MCF 10A (cell line): ENCODE measurements at regions of chr4 and their contacts with region 1.

Region 1: DNA sequence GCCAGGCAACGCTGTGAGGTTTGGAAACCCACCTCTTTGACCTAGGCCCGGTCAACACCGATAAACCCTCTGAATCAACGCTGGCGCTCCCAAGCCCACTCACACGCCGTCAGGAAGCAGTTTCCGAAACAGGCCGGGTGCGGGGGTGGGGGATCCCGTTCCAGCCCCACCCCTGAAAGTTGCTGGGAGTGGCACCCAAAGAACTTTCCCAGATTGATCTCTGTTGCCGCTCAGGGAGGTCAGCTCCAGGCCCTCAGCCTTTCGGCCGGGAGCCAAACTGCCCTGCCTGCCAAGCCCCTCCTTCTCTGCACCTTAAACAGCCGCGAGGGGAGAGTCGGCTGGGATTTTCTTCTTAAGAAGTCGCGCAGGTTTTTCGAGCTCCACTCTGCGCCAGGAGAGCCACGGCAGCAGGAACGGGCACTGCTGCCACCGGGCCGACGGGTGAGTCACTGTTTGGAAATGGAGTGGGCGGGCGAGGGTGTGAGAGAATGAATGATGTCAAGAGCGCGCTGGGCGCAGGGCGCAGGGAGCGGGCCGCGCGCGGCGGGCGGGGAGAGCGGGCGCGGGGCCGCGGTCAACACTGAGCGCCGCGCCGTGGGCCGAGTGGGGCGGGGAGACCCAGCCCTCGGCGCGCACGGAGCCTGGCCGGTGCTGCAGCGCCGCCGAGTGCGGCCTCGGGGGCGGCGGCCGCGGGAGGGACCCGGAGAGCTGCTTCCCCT is at the start of gene SGMS2:
- DNase-seq: peak; percentile 96
- H3K4me3 Mint-ChIP-seq: peak within 1 kb of the TSS; percentile 94
- H3K27ac Mint-ChIP-seq: peak within 1 kb of the TSS; percentile 100
- H3K4me1 Mint-ChIP-seq: peaks cover 30% of the 10 kb centered on the region
- H3K27me3 Mint-ChIP-seq: no peaks in the 10 kb centered on the region
- CTCF ChIP-seq: no peak
- total RNA-seq, gene SGMS2: 77.8 and 85.3 TPM in 2 replicates

Region 2: GRCh38 chr4:107747748-107748486 is 76.6 kb before region 1 on chr4:
- CTCF ChIA-PET with region 1: no interaction called
- POLR2A ChIA-PET with region 1: no interaction called
- intact Hi-C with region 1: no loop called
- DNase-seq: no peak
- H3K4me3 Mint-ChIP-seq: no peak overlapping the region
- H3K27ac Mint-ChIP-seq: no peak overlapping the region
- H3K4me1 Mint-ChIP-seq: no peaks in the 10 kb centered on the region
- H3K27me3 Mint-ChIP-seq: peaks cover 34% of the 10 kb centered on the region
- CTCF ChIP-seq: no peak

Region 3: GRCh38 chr4:107757864-107758476 is 66.5 kb before region 1 on chr4:
- CTCF ChIA-PET with region 1: interaction called, 26 read pairs
- POLR2A ChIA-PET with region 1: interaction called, 40 read pairs
- intact Hi-C with region 1: loop called (anchors 2 kb)
- DNase-seq: peak; percentile 36
- H3K4me3 Mint-ChIP-seq: no peak overlapping the region
- H3K27ac Mint-ChIP-seq: no peak overlapping the region
- H3K4me1 Mint-ChIP-seq: no peaks in the 10 kb centered on the region
- H3K27me3 Mint-ChIP-seq: no peaks in the 10 kb centered on the region
- CTCF ChIP-seq: peak; percentile 41

Region 4: DNA sequence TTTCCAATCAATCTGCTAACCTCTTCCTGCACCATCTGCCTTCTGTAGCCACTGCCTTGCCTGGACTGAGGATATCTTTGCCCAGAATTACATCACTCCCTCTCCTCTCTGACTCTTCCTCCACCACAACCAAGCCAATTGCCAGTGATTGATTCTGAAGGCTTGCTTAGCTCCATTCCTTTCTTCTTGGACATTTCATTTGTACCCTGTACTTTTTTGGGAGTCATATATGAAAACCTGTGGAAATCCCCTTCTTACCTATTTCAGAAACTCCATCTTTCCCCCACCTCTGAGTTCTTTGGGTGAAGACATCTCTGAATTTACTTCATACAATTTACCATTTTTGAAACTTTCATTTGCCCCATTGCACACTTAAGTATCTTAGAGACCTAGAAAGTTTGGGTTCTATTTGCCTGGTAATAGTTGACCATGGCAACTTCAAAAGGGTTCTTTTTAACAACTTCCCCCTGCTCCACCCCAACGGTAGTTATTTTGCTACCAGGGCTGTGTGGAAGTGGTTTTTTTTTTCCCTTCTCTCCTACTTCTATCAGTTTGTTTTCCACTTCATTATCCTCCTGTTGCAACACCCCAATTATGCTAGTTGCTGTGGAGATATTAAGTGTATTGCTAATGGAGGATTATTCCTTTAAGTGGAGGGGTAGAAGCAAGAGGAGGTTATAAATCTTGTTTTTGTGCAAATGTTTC is 14.5 kb after region 1 on chr4:
- CTCF ChIA-PET with region 1: interaction called, 4 read pairs
- POLR2A ChIA-PET with region 1: interaction called, 39 read pairs
- intact Hi-C with region 1: no loop called
- DNase-seq: peak; percentile 48
- H3K4me3 Mint-ChIP-seq: no peak overlapping the region
- H3K27ac Mint-ChIP-seq: no peak overlapping the region
- H3K4me1 Mint-ChIP-seq: peaks cover 20% of the 10 kb centered on the region
- H3K27me3 Mint-ChIP-seq: no peaks in the 10 kb centered on the region
- CTCF ChIP-seq: no peak

Region 5: DNA sequence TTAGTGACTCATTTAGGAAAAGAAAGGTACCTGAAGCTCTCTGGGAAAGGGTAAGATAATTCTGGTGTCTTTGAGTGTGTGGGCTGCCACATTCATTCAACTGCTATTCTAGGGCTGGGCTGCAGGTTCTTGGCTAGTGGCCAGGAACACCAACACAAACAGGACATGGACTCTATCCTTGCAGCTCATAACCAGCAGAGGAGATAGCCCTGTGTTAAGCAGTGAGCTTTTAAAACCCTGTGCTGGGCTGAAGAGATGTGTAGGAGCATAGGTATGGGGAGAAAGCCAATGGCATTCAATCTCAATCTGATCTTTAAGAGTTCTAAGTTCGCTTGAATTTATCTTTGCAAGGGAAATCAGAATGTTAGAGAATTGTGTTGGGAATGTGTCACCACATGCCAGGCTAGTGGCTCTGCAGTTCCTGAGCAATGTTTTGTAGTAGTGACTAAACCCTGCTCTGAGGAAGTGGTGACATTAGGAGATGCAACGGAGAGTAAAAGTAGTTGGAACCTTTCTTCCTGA is 39.4 kb after region 1 on chr4:
- CTCF ChIA-PET with region 1: interaction called, 5 read pairs
- POLR2A ChIA-PET with region 1: interaction called, 248 read pairs
- intact Hi-C with region 1: loop called (anchors 1 kb)
- DNase-seq: peak; percentile 84
- H3K4me3 Mint-ChIP-seq: no peak overlapping the region
- H3K27ac Mint-ChIP-seq: peak overlapping the region; percentile 98
- H3K4me1 Mint-ChIP-seq: peaks cover 26% of the 10 kb centered on the region
- H3K27me3 Mint-ChIP-seq: no peaks in the 10 kb centered on the region
- CTCF ChIP-seq: no peak

Region 6: DNA sequence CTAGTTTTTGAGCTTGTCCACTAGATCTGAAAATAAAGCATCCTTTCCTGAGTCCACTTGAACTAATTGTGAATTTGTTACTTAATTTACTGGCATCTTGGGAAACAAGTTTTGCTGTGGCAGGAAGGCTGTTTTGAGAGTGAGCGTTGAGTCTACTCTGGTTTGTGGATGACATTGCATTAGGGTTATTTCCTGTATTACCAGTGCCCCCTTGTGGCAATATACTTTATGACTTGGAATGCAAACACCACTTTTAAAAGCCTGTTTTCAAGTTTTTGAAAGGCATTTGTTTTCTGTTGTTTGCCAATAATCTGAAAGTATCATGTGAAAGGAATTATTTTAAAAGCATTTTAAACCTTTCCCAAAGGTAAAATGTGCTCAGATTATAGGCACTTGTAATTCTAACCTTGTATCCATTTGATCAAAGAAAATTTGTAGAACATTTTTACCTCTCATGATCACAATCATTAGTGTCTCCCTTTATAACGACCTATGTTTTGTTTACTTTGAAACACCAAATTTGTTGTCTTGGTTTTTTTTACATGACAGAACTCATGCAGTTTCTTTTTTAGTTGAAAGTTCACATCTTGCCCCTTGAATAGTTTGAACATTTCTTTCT is 88.9 kb after region 1 on chr4:
- CTCF ChIA-PET with region 1: interaction called, 14 read pairs
- POLR2A ChIA-PET with region 1: interaction called, 39 read pairs
- intact Hi-C with region 1: loop called (anchors 1 kb)
- DNase-seq: peak; percentile 79
- H3K4me3 Mint-ChIP-seq: no peak overlapping the region
- H3K27ac Mint-ChIP-seq: no peak overlapping the region
- H3K4me1 Mint-ChIP-seq: no peaks in the 10 kb centered on the region
- H3K27me3 Mint-ChIP-seq: no peaks in the 10 kb centered on the region
- CTCF ChIP-seq: peak; percentile 50

Region 7: GRCh38 chr4:107989537-107990386 is 165.2 kb after region 1 on chr4 and contains the start of gene HADH:
- CTCF ChIA-PET with region 1: no interaction called
- POLR2A ChIA-PET with region 1: interaction called, 10 read pairs
- intact Hi-C with region 1: no loop called
- DNase-seq: peak; percentile 91
- H3K4me3 Mint-ChIP-seq: peak within 1 kb of the TSS; percentile 90
- H3K27ac Mint-ChIP-seq: peak within 1 kb of the TSS; percentile 77
- H3K4me1 Mint-ChIP-seq: peaks cover 20% of the 10 kb centered on the region
- H3K27me3 Mint-ChIP-seq: no peaks in the 10 kb centered on the region
- CTCF ChIP-seq: no peak
- total RNA-seq, gene HADH: 19.2 and 26.2 TPM in 2 replicates